Aorta (tissue), 5 donors: ENCODE measurements at regions of chr20 and their contacts with region 1.

Region 1: GRCh38 chr20:49484180-49485140 is 2.0 kb upstream of the KCNB1 start:
- DNase-seq: peak; percentile 82 to 93
- ATAC-seq: peak; percentile 84
- H3K4me3 ChIP-seq: peak overlapping the region; percentile 4 to 18
- H3K27ac ChIP-seq: no peak overlapping the region
- H3K4me1 ChIP-seq: no peaks in the 10 kb centered on the region
- H3K27me3 ChIP-seq: no peaks in the 10 kb centered on the region

Region 2: GRCh38 chr20:49245921-49246740 is 238.3 kb before region 1 on chr20:
- intact Hi-C with region 1: no loop called
- DNase-seq: no peak
- ATAC-seq: peak; percentile 61
- H3K4me3 ChIP-seq: no peak overlapping the region
- H3K27ac ChIP-seq: peak overlapping the region in 1 of 2 donors; percentile 65
- H3K4me1 ChIP-seq: no peaks in the 10 kb centered on the region
- H3K27me3 ChIP-seq: no peaks in the 10 kb centered on the region

Region 3: DNA sequence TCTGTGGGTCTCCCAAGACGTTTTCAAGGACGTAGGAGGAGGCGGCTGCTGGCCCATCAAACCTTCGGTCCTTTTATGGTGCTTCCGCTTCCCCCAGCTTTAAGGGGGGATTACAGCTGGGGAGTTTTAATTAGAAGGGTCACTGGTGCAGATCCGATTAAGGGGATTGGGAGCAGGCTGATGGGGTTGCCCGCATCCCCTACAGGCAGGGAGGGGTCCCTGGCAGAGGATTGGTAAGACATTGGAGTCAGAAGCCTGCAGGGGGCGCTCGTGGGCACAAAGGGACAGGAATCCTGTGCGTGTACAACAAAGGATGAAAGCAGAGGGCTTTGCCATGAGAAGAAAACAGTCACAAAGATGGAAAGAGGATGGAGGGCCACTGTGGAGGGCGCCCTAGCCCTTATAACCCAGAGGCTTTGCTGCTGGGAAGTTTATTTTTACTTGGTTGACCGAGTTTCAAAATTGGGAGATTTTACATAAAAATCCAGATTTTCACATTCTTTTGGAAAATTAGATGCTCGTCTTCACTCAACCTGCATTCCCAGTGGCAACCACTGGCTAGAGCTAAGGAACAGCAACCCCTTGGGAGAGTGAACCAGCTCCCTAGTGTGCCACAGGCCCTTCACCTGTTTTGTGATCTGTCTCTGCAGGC is 99.9 kb before region 1 on chr20:
- intact Hi-C with region 1: loop called (anchors 5 kb)
- DNase-seq: peak; percentile 75 to 94
- ATAC-seq: peak; percentile 69
- H3K4me3 ChIP-seq: no peak overlapping the region
- H3K27ac ChIP-seq: no peak overlapping the region
- H3K4me1 ChIP-seq: no peaks in the 10 kb centered on the region
- H3K27me3 ChIP-seq: no peaks in the 10 kb centered on the region